Activated CD8-positive, alpha-beta T cell treated with anti-CD3 and anti-CD28 coated beads for 36 hours (primary cell): ENCODE measurements at regions of chr14 and their contacts with region 1.

Region 1: DNA sequence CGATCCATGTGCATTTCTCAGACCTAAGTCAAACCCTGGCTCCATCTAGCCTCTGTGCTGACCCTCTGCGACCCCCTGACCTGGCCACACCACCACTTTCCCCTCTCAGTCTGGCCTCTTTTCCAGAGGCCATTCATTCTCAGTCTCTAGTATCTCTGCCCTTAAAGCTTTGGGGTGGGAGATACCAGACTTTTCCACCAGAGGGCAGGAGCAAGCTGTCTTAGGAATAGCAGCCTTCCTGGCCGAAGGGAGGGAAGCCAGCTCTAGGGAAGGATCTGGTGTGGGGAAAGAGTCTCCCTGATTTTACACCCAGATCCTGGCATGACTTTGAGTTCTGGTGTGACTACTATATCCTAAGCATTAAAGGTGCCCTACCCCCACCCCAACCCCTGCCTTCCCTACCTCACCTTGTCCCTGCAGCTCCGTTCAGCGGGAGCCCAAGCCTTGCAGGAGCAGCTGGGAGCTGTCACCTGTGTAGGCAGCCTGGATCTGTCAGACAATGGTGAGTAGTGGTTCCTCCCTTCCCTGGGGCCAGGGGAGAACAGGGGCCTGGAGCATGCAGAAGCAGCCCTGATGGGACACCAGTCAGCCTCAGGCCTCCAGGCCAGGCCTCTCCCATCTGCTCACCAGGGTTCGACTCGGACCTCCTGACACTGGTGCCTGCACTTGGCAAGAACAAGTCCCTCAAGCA is 6.6 kb downstream of the CARMIL3 start:
- DNase-seq: peak; percentile 85
- ATAC-seq: peak; percentile 80
- H3K4me3 Mint-ChIP-seq: no peak overlapping the region
- H3K27ac Mint-ChIP-seq: peak overlapping the region; percentile 85
- H3K4me1 Mint-ChIP-seq: peaks cover 6% of the 10 kb centered on the region
- H3K27me3 Mint-ChIP-seq: no peaks in the 10 kb centered on the region
- CTCF ChIP-seq: peak; percentile 95

Region 2: DNA sequence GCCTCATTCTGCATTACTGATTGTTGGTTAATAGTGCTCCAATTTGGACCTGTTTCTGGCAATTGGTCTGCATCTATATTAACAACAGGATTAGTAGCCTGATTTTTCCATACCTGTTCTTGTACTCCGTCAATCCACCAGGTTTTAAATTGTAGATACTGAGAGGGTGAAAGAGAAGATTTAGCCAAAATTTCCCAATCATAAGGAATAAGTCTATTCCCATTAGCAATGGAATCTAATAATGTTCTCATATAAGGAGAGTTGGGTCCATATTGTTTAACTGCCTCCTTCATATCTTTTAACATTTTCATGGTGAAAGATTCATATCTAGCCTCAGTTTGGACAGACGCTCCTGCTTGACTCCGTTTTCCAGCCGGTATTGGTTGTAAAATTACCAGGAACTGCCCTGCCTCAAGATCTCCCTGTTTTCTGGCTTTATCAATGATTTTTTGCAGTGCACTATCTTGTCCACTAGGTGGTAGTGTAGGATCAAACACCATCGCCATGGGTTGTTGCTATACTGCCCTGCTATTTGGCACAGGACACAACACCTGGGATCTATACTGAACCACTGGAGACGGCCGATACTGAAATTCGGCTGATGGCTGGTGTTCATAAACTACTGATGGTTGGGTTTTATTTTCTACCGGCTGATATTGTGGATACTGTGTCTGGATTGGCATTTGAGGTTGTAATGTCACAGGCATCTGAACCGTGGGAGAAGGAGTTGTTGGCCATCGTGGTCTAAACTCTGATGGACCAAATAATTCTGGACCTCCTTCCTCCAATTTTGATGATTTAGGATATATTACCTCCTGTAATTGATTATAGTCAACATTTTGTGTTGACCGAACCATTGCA is 44.5 kb before region 1 on chr14:
- CTCF ChIA-PET with region 1: interaction called, 4 read pairs
- POLR2A ChIA-PET with region 1: no interaction called
- intact Hi-C with region 1: loop called (anchors 5 kb)
- DNase-seq: peak; percentile 63
- ATAC-seq: peak; percentile 99
- H3K4me3 Mint-ChIP-seq: no peak overlapping the region
- H3K27ac Mint-ChIP-seq: no peak overlapping the region
- H3K4me1 Mint-ChIP-seq: peaks cover 22% of the 10 kb centered on the region
- H3K27me3 Mint-ChIP-seq: no peaks in the 10 kb centered on the region
- CTCF ChIP-seq: peak; percentile 84

Region 3: DNA sequence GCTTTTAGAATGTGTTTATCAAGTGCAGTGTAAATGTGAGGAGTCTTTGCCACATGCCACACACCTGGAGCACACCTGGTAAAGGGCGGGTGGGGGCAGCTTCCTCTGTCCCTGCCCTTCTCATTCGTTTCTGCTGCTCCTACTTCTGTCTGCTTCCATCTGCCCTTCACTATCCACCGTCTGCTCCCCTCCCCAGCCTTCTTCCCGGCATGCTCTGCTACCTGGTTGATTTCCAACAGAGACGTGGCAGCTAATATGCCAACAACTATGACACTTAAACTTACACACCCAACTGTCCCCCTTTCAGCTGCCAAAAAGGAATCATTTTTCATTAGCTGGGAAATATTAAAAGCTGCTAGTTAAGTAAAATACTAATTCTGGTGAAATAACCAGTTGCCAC is 15.7 kb before region 1 on chr14:
- CTCF ChIA-PET with region 1: interaction called, 23 read pairs
- POLR2A ChIA-PET with region 1: interaction called, 3 read pairs
- intact Hi-C with region 1: no loop called
- DNase-seq: no peak
- ATAC-seq: no peak
- H3K4me3 Mint-ChIP-seq: no peak overlapping the region
- H3K27ac Mint-ChIP-seq: no peak overlapping the region
- H3K4me1 Mint-ChIP-seq: peaks cover 5% of the 10 kb centered on the region
- H3K27me3 Mint-ChIP-seq: peaks cover 7% of the 10 kb centered on the region
- CTCF ChIP-seq: no peak

Region 4: GRCh38 chr14:24075485-24076301 is 17.3 kb after region 1 on chr14:
- CTCF ChIA-PET with region 1: interaction called, 127 read pairs
- POLR2A ChIA-PET with region 1: interaction called, 9 read pairs
- intact Hi-C with region 1: no loop called
- DNase-seq: no peak
- ATAC-seq: no peak
- H3K4me3 Mint-ChIP-seq: no peak overlapping the region
- H3K27ac Mint-ChIP-seq: peak overlapping the region; percentile 55
- H3K4me1 Mint-ChIP-seq: peaks cover 18% of the 10 kb centered on the region
- H3K27me3 Mint-ChIP-seq: no peaks in the 10 kb centered on the region
- CTCF ChIP-seq: no peak

Region 5: DNA sequence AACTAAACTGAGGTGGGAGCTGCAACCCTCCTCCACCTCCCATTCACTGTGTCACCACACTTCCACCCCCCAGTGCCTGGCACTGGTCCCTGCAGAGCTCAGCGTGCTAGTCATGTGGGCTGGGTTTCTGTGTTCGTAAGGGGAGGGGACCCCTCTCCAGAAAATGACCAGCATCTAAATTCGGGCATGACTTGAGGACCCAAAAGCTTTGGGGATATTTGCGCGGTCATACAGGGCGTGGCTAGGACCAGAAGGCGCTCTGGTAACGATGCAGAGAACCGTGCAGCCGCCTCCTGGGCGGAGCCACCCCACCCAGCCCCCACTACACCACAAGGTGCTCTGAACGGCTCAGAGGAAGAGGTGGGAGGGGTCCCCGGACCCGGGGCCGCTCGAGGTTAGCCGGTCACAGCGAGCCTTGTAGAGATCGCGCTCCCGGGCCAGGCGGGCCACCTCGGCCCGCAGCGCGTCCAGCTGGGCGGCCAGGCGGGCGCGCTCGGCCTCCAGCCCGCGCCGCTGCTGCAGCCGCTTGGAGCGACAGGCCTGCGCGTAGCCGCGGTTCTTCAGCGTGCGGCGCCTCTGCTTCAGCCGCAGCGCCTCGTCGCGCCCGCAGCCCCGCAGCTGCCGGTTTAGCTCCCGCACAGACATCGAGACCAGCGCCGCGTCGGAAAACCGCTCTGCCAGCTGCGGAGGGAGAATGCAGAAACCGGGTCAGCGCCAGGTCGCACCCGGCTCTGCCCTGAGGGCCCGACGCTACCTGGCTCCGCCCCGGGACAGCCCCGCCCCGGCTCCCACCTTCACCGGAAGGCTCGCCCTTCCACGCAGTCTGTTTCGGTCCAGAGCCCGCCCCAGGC is 22.7 kb after region 1 on chr14:
- CTCF ChIA-PET with region 1: interaction called, 127 read pairs
- POLR2A ChIA-PET with region 1: interaction called, 9 read pairs
- intact Hi-C with region 1: no loop called
- DNase-seq: peak; percentile 89
- ATAC-seq: peak; percentile 93
- H3K4me3 Mint-ChIP-seq: peak overlapping the region; percentile 75
- H3K27ac Mint-ChIP-seq: peak overlapping the region; percentile 75
- H3K4me1 Mint-ChIP-seq: peaks cover 19% of the 10 kb centered on the region
- H3K27me3 Mint-ChIP-seq: no peaks in the 10 kb centered on the region
- CTCF ChIP-seq: no peak